Vagina (tissue), 2 donors: ENCODE measurements at regions of chr2 and their contacts with region 1.

Region 1: GRCh38 chr2:162233197-162233596 is 10.0 kb downstream of the FAP start:
- DNase-seq: no peak
- H3K4me3 ChIP-seq: no peak overlapping the region
- H3K27ac ChIP-seq: no peak overlapping the region
- H3K4me1 ChIP-seq: peaks cover 11% of the 10 kb centered on the region
- H3K27me3 ChIP-seq: no peaks in the 10 kb centered on the region
- CTCF ChIP-seq: no peak
- POLR2A ChIP-seq: no peak

Region 2: GRCh38 chr2:162297925-162298552 is 64.8 kb after region 1 on chr2:
- intact Hi-C with region 1: loop called (anchors 10 kb)
- DNase-seq: no peak
- H3K4me3 ChIP-seq: no peak overlapping the region
- H3K27ac ChIP-seq: no peak overlapping the region
- H3K4me1 ChIP-seq: no peaks in the 10 kb centered on the region
- H3K27me3 ChIP-seq: no peaks in the 10 kb centered on the region
- CTCF ChIP-seq: peak in 2 of 3 experiments; percentile 76 to 77
- POLR2A ChIP-seq: no peak

Region 3: DNA sequence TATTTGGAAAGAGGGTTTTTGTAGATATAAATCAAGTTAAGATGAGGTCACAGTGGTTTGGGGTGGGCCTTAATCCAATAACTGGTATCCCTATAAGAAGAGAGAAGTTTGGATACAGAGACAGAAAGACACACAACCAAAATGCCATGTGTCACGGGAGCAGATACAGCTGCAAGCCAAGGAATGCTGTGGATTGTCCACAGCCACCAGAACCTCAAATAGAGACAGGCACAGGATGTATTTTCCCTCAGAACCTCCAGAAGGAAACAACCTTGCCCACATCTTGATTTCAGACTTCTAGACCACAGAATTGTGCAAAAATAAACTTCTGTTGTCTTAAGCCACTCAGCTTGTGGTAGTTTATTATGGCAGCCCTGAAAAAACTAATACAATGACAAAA is 216.3 kb after region 1 on chr2:
- intact Hi-C with region 1: no loop called
- DNase-seq: no peak
- H3K4me3 ChIP-seq: no peak overlapping the region
- H3K27ac ChIP-seq: no peak overlapping the region
- H3K4me1 ChIP-seq: no peaks in the 10 kb centered on the region
- H3K27me3 ChIP-seq: no peaks in the 10 kb centered on the region
- CTCF ChIP-seq: no peak
- POLR2A ChIP-seq: no peak